ENCODE measurements at regions of chr11 and their contacts with region 1.

Region 1: DNA sequence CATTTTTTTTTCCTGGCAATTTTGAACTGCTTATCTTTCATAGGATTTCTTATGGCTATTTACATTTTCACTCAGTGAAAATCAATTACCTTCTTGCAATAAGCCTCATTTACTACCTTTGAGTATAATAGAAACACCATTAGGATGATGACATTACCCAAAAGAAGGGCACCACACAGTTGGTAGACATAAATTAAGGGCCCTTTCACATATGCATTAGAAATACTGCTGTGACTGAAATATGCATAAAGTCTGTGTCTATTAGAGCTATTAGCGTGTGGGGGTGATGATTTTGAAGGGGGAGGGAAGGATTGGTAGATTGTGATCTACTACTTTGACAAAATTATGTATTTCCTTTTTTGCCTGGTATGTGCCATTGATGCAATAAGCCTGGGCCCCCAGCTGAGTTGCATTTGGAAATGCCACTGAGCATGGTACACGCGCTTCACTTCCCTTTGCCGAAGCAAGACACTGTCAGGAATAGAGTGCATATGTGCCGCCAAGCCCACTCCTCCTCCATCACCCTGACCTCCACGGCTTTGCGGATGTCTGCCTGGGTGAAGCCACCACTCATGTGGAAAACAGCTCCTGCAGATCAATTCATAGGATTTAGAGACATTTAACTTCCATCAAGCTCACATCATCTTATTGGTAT is 339.3 kb downstream of the DCDC1 start:
- DNase-seq: no peak
- H3K4me3 ChIP-seq: no peak overlapping the region
- H3K27ac ChIP-seq: no peak overlapping the region
- H3K27me3 ChIP-seq: no peaks in the 10 kb centered on the region
- CTCF ChIP-seq: no peak

Region 2: DNA sequence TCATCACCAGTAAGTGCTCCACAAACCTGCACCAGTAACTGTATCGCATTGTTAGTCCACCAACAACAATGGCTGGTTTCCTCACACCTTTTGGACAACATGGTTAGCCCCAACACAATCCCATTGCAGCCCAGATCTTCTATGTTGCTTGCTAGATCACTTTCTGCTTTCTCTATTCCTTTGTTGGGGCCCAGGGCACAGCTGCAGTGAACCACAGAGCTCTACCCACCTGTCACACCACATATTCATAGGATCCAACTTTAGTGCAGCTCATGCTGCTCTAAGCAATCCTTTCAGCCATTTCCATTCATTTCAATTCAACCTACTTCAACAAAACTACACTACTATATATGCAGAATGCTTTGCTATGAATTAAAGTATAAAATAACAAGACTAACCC is 25.1 kb before region 1 on chr11:
- CTCF ChIA-PET with region 1: no interaction called
- POLR2A ChIA-PET with region 1: no interaction called
- DNase-seq: no peak
- H3K4me3 ChIP-seq: no peak overlapping the region
- H3K27ac ChIP-seq: no peak overlapping the region
- H3K27me3 ChIP-seq: no peaks in the 10 kb centered on the region
- CTCF ChIP-seq: no peak

Region 3: DNA sequence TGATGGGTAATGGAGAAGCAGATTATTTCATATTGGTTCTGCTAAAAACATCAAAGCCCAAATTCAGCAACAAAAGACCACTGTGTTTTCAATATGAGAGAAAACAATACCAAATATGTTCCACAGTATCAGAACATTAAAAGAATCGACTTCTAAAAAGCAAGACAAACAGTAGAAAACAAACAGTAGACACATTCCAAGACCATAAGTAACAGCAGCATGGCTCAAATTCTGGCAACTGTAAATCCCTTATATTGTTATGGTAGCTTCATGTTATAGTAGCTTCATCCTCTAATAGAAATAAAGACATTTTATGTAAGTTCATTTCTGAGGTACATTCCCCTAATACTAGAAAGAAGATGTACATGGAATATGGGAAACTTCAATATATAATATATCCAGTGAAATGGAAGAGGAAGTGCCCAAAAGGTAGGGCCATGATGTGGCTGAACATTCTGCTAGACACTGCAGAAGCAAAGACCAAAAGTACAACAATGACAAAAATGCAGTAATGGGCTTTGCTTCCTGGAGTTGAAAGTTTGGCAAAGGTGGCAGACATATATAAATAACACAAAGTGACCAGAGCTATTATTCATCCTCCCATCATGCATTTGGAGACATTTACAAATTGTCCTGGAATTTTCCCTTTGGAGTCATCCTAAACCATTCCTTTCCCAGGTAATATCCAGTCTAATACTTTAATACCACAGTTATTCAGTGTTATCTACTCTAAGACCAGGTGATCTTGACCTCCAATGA is 39.4 kb after region 1 on chr11:
- CTCF ChIA-PET with region 1: no interaction called
- POLR2A ChIA-PET with region 1: interaction called, 12 read pairs
- DNase-seq: no peak
- H3K4me3 ChIP-seq: no peak overlapping the region
- H3K27ac ChIP-seq: no peak overlapping the region
- H3K27me3 ChIP-seq: no peaks in the 10 kb centered on the region
- CTCF ChIP-seq: no peak

Region 4: GRCh38 chr11:31725176-31725575 is 694.9 kb after region 1 on chr11:
- CTCF ChIA-PET with region 1: no interaction called
- POLR2A ChIA-PET with region 1: no interaction called
- DNase-seq: no peak
- H3K4me3 ChIP-seq: no peak overlapping the region
- H3K27ac ChIP-seq: no peak overlapping the region
- H3K27me3 ChIP-seq: no peaks in the 10 kb centered on the region
- CTCF ChIP-seq: no peak

Measured in AG04450 (cell line).